ENCODE measurements at regions of chr14 and their contacts with region 1.

Region 1: DNA sequence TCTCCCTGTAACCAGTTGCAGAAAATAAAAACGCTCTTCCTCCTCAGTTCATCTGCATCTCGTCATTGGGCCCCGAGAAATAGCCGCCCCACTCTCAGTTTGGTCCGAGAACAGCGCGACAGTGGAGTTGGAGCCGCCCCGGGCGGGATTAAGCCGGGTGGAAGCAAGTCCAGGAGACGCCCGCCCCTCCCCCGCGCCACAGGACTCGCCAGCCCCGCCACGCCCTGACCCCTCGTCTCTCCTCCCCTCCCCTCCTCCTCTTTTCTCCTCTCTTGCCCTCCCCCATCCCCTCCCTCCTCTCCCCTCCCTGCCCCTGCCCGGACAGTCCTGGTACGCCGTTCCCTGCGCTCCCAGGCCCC is 83.7 kb downstream of the TNFAIP2 start:
- DNase-seq: no peak
- H3K4me3 ChIP-seq: peak overlapping the region; percentile 38
- CTCF ChIP-seq: no peak

Region 2: DNA sequence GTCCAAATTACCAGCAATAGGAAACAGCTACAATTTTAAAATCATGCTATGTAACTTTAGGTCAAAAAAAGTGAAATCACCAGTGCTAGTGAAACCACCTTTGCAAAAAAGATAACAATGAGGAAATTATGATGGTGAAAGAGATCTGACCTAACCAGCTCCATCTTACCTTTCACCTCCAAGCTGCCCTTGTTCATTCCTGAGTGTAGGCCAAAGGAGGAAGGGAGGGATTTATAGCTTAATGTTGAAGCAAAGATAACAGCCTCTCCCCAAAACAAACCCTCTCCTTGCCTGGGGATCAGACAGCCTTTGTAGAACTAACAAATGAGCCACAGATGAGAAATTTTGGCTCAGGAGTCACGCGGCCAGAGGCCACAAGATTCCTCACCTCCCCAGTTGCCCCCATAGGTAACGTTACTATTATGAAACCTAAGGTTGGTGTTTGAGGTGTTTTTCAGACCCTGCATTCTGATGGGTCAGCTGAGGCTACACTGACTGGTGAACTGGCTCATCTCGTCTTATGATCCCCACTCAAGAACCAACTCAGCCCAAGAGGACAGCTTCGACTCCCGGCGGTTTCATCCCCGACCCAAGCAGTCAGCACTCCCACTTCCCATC is 44.0 kb after region 1 on chr14:
- in situ Hi-C with region 1: loop called (anchors 5 kb)
- DNase-seq: no peak
- H3K4me3 ChIP-seq: no peak overlapping the region
- CTCF ChIP-seq: no peak